ENCODE measurements at regions of chr2 and their contacts with region 1.

Region 1: DNA sequence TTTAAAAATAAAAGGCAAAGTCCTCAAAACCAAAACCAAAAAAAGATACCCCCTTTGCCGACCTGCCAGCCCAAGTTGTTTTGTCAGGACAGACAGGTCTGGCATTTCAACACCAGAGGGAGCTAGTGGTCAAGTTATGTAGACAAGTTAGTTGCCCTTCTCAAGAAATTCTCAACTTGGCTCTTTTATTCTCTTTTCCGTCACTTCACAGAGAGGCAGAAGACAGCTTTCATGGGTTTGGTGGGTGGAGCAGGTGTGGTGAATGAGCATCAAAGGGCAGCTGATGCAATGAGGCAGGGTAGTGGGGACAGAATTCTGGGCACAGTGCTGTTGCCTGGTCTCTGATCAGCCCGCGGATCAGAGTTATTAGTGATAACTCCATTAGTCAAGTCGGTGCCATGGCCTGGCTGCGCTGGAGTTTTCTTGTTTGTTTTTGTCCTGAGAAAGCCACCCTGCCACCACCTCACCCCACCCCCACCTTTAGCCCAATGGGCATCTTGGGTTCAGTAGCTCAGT is 303.7 kb upstream of the EPAS1 start:
- DNase-seq: peak; percentile 76
- H3K4me3 ChIP-seq: no peak overlapping the region
- H3K27ac ChIP-seq: peak overlapping the region in 2 of 4 donors; percentile 69 to 72
- H3K4me1 ChIP-seq: peaks cover 0 to 44% (median 35%) of the 10 kb centered on the region in 4 donors
- H3K27me3 ChIP-seq: no peaks in the 10 kb centered on the region
- CTCF ChIP-seq: peak; percentile 63 to 84 (median 74)
- EP300 ChIP-seq: no peak
- POLR2A ChIP-seq: no peak

Region 2: GRCh38 chr2:45643543-45644542 is 349.7 kb before region 1 on chr2:
- intact Hi-C with region 1: loop called (anchors 2 kb)
- DNase-seq: peak; percentile 78
- H3K4me3 ChIP-seq: peak overlapping the region; percentile 32 to 69 (median 58)
- H3K27ac ChIP-seq: peak overlapping the region in 3 of 4 donors; percentile 35 to 67 (median 36)
- H3K4me1 ChIP-seq: peaks cover 0 to 37% (median 22%) of the 10 kb centered on the region in 4 donors
- H3K27me3 ChIP-seq: peaks cover 0 to 4% (median 0%) of the 10 kb centered on the region in 3 donors
- CTCF ChIP-seq: peak; percentile 91 to 99 (median 97)
- EP300 ChIP-seq: no peak
- POLR2A ChIP-seq: no peak